ENCODE measurements at regions of chr13 and their contacts with region 1.

Region 1: GRCh38 chr13:93227878-93228642 is 1.5 kb downstream of the GPC6 start:
- DNase-seq: peak; percentile 87
- ATAC-seq: peak; percentile 74
- H3K4me3 ChIP-seq: peak overlapping the region; percentile 50
- H3K27ac ChIP-seq: peak overlapping the region; percentile 75
- H3K4me1 ChIP-seq: 0 out of 2 replicates have a peak, but pooled peaks cover 2% of the 10 kb centered on the region
- H3K27me3 ChIP-seq: no peaks in the 10 kb centered on the region
- CTCF ChIP-seq: peak; percentile 63
- POLR2A ChIP-seq: 0 out of 2 replicates have a peak, but pooled peaks have one; percentile 46
- RAD21 ChIP-seq: peak; percentile 64

Region 2: GRCh38 chr13:92806215-92806614 is 421.8 kb before region 1 on chr13:
- CTCF ChIA-PET with region 1: no interaction called
- POLR2A ChIA-PET with region 1: no interaction called
- dilution Hi-C with region 1: no loop called
- in situ Hi-C with region 1: no loop called
- intact Hi-C with region 1: loop called (anchors 5 kb)
- DNase-seq: no peak
- ATAC-seq: peak; percentile 40
- H3K4me3 ChIP-seq: peak overlapping the region; percentile 3; the same call in 1 of the 2 replicates
- H3K27ac ChIP-seq: no peak overlapping the region
- H3K4me1 ChIP-seq: no peaks in the 10 kb centered on the region
- H3K27me3 ChIP-seq: no peaks in the 10 kb centered on the region
- CTCF ChIP-seq: no peak
- POLR2A ChIP-seq: no peak
- RAD21 ChIP-seq: no peak

Region 3: GRCh38 chr13:93535256-93535655 is 307.2 kb after region 1 on chr13:
- CTCF ChIA-PET with region 1: interaction called, 4 read pairs
- POLR2A ChIA-PET with region 1: no interaction called
- dilution Hi-C with region 1: no loop called
- in situ Hi-C with region 1: no loop called
- intact Hi-C with region 1: loop called (anchors 5 kb)
- DNase-seq: peak; percentile 76
- ATAC-seq: peak; percentile 75
- H3K4me3 ChIP-seq: no peak overlapping the region
- H3K27ac ChIP-seq: no peak overlapping the region
- H3K4me1 ChIP-seq: no peaks in the 10 kb centered on the region
- H3K27me3 ChIP-seq: no peaks in the 10 kb centered on the region
- CTCF ChIP-seq: no peak
- POLR2A ChIP-seq: no peak
- RAD21 ChIP-seq: no peak

Region 4: GRCh38 chr13:93861818-93862217 is 633.8 kb after region 1 on chr13:
- CTCF ChIA-PET with region 1: no interaction called
- POLR2A ChIA-PET with region 1: no interaction called
- dilution Hi-C with region 1: no loop called
- in situ Hi-C with region 1: loop called (anchors 10 kb)
- intact Hi-C with region 1: loop called (anchors 5 kb)
- DNase-seq: peak; percentile 92
- ATAC-seq: peak; percentile 94
- H3K4me3 ChIP-seq: no peak overlapping the region; the same call in 1 of the 2 replicates
- H3K27ac ChIP-seq: peak overlapping the region; percentile 43; the same call in 1 of the 2 replicates
- H3K4me1 ChIP-seq: peaks cover 8% of the 10 kb centered on the region; the same call in 1 of the 2 replicates
- H3K27me3 ChIP-seq: no peaks in the 10 kb centered on the region
- CTCF ChIP-seq: no peak
- POLR2A ChIP-seq: no peak
- RAD21 ChIP-seq: no peak

Region 5: GRCh38 chr13:94121686-94122085 is 893.6 kb after region 1 on chr13:
- CTCF ChIA-PET with region 1: no interaction called
- POLR2A ChIA-PET with region 1: no interaction called
- dilution Hi-C with region 1: no loop called
- in situ Hi-C with region 1: no loop called
- intact Hi-C with region 1: loop called (anchors 5 kb)
- DNase-seq: peak; percentile 86
- ATAC-seq: peak; percentile 99
- H3K4me3 ChIP-seq: no peak overlapping the region
- H3K27ac ChIP-seq: no peak overlapping the region
- H3K4me1 ChIP-seq: no peaks in the 10 kb centered on the region
- H3K27me3 ChIP-seq: no peaks in the 10 kb centered on the region
- CTCF ChIP-seq: no peak
- POLR2A ChIP-seq: no peak
- RAD21 ChIP-seq: no peak

Region 6: DNA sequence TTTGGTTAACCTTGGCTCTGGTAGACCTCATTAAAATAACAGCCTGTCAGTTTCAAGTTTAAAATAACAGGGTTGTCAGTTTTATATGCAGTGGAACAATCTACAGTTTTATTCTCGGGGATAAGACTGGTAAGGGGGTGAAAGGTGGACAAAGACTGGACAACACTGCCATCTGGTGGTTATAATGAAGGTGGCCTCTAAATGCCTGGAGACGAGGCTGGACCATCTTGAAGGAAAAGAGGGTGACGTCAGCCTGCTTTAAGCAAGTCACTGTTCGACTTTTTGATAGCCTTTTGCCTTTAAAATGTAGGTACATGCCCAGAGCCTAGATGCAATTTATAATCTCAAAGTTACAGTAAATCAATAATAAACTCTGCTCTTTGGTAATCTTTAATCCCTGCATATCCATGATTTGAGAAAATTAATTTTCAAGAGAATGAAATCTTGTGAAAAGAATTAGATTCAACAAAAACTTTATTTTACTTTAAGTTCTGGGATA is 1134.4 kb after region 1 on chr13:
- CTCF ChIA-PET with region 1: no interaction called
- POLR2A ChIA-PET with region 1: no interaction called
- dilution Hi-C with region 1: no loop called
- in situ Hi-C with region 1: no loop called
- intact Hi-C with region 1: loop called (anchors 1 kb)
- DNase-seq: peak; percentile 95
- ATAC-seq: peak; percentile 100
- H3K4me3 ChIP-seq: no peak overlapping the region
- H3K27ac ChIP-seq: no peak overlapping the region
- H3K4me1 ChIP-seq: no peaks in the 10 kb centered on the region
- H3K27me3 ChIP-seq: no peaks in the 10 kb centered on the region
- CTCF ChIP-seq: peak; percentile 94
- POLR2A ChIP-seq: no peak
- RAD21 ChIP-seq: peak; percentile 99

Measured in IMR-90 (cell line).